ENCODE measurements at regions of chr5 and their contacts with region 1.

Region 1: GRCh38 chr5:40755407-40756365 is at the start of gene TTC33:
- DNase-seq: peak; percentile 95 to 99 (median 98)

Region 2: GRCh38 chr5:40518511-40518967 is 237.1 kb before region 1 on chr5:
- intact Hi-C with region 1: no loop called
- DNase-seq: no peak

Region 3: DNA sequence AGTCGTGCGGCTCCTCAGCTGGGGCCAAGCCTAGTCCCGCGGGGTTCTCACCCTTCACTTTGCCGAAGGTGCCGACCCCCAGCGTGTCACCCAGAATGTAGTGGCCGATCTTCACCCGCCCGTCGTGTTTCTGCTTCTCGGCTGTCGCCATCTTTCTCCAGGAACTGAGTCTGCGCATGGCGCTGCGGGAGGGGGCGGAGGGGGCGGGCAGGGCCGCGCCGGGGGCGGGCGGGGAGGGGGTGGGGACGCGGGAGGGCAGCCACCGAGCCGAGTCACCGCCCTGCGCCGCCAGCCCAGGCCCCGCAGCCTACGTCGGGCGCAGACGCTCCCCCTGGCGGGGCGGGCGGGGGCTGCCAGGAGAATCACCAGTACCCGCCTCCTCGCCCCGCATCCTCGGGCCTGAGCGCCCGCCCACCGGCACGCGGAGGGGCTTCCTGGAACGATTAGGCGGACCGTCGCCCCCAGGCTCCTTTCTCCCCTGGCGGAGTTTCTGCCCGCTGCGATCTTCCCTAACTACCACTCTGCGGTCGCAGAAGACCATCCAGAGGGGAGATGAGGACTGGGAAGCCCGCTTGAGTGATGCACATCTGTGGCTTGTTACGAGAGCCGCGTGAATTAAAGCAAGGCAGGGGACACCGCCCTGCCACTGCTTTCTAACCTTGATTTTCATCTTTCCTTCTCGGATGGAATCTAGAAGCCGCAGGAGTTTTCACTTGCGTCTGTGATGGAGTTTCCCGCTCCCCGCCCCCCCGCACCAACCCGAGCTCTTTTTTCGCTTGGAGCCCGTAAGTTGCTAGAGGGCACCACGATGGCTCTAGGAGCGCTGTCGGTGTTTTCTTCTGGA is 42.5 kb after region 1 on chr5 and contains the start of gene PRKAA1:
- intact Hi-C with region 1: loop called (anchors 2 kb)
- DNase-seq: peak; percentile 75 to 98 (median 86)

Region 4: DNA sequence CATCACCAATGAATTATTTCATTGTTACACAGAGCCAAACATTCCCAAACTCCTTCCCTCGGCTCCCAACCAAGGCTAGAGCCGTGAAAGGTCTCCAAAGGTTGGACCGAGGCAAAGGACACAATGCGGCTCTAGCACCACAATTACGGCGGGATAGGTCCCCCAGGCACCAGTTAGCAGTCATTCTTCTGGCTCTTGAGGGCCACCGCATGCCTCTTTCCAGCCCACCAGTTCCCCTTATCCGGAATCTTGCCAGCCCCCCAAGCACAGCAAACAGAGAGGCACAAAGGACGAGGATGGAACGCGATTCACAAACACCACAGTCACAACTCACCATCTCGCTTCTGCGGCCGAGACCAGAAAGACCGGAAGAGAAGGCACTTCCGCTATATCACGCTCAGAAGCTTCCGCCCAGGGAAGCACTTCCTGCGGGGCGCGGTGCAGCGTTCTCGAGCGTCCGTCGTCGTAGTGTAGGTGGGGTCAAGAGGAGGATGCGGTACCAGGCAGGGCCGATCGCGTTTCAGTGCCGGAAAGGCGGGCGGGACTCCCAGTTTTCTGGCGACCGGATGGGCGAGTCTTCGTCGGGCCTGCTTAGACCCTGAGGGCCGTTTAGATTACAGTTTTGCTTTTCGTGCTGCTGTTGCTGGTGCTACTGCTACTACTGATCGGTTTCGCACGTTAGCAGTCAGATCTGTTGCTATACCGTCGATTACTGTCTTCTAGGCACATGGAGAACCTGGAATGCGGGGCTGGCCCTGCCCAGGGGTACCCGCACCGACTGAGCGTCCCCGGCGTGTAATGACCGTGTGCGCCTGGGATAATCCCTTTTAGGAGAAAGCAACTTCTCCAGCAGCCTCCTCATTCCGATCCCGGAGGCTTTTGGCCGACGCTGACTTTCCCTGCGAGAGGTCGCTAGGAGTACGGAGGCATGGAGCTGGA is 79.4 kb after region 1 on chr5 and contains the start of gene RPL37:
- intact Hi-C with region 1: loop called (anchors 1 kb)
- DNase-seq: peak; percentile 94 to 99 (median 96)

Region 5: GRCh38 chr5:40879163-40879942 is 123.7 kb after region 1 on chr5:
- intact Hi-C with region 1: loop called (anchors 5 kb)
- DNase-seq: no peak

Measured in posterior cingulate gyrus (tissue), 11 donors.